ENCODE measurements at regions of chr9 and their contacts with region 1.

Region 1: GRCh38 chr9:122125158-122125508 is 32.0 kb upstream of the TTLL11 start:
- DNase-seq: peak; percentile 82 to 94 (median 90)
- H3K4me3 ChIP-seq: no peak overlapping the region
- H3K27ac ChIP-seq: peak overlapping the region in 43 of 59 donors; percentile 19 to 94 (median 79)
- H3K27me3 ChIP-seq: peaks cover 0 to 15% (median 0%) of the 10 kb centered on the region in 45 donors
- CTCF ChIP-seq: peak; percentile 89 to 100 (median 98)

Region 2: DNA sequence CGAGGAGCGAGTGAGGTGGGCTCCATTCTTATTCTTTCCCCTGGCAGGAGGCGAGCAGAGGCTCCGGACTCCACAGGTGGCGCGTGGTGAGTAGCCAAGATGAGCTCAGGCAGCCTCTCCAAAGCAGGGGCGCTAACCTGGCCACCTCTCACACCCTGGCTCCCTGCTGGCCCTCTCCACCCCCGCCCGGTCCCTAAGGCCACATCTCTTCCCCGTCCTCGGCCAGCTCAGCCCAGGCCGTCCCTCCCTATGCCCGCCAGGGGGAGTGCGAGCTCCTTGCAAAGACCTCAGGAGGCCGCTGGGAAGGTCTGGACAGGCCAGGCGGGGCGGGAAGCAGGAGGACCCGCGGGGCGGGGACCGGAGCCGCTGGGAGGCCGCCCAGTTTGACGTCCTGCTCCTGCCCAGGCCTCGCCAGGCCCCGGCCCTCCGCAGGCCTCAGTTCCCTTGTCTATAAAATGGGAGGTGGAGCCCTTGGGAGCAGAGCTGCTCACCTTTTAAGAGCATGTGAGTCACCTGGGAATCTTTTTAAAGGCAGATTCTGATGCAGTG is 579.2 kb before region 1 on chr9:
- intact Hi-C with region 1: loop called in 1 of 2 experiments (anchors 10 kb)
- DNase-seq: peak; percentile 88 to 97 (median 92)
- H3K4me3 ChIP-seq: peak overlapping the region in 56 of 59 donors; percentile 7 to 60 (median 45)
- H3K27ac ChIP-seq: peak overlapping the region in 5 of 59 donors; percentile 3 to 60 (median 51)
- H3K27me3 ChIP-seq: no peaks in the 10 kb centered on the region
- CTCF ChIP-seq: peak; percentile 37 to 98 (median 96)

Region 3: GRCh38 chr9:122099271-122099869 is 25.8 kb before region 1 on chr9:
- intact Hi-C with region 1: loop called (anchors 1 to 2 kb)
- DNase-seq: peak; percentile 81 to 90 (median 84)
- H3K4me3 ChIP-seq: peak overlapping the region in 29 of 59 donors; percentile 0 to 50 (median 31)
- H3K27ac ChIP-seq: peak overlapping the region in 3 of 59 donors; percentile 36 to 65 (median 49)
- H3K27me3 ChIP-seq: no peaks in the 10 kb centered on the region
- CTCF ChIP-seq: peak; percentile 82 to 99 (median 94)

Region 4: GRCh38 chr9:122264360-122265148 is 139.4 kb after region 1 on chr9 and contains the starts of genes MRRF and RBM18:
- intact Hi-C with region 1: loop called (anchors 10 kb)
- DNase-seq: peak; percentile 83 to 95 (median 88)
- H3K4me3 ChIP-seq: peak within 1 kb of the TSS; percentile 57 to 98 (median 83)
- H3K27ac ChIP-seq: peak within 1 kb of the TSS; percentile 49 to 95 (median 87)
- H3K27me3 ChIP-seq: no peaks in the 10 kb centered on the region
- CTCF ChIP-seq: peak in 28 of 56 donors; percentile 5 to 64 (median 30)
- total RNA-seq, gene MRRF: 21.9 to 44.0 (median 29.3) TPM
- total RNA-seq, gene RBM18: 14.1 to 43.0 (median 29.6) TPM

Region 5: DNA sequence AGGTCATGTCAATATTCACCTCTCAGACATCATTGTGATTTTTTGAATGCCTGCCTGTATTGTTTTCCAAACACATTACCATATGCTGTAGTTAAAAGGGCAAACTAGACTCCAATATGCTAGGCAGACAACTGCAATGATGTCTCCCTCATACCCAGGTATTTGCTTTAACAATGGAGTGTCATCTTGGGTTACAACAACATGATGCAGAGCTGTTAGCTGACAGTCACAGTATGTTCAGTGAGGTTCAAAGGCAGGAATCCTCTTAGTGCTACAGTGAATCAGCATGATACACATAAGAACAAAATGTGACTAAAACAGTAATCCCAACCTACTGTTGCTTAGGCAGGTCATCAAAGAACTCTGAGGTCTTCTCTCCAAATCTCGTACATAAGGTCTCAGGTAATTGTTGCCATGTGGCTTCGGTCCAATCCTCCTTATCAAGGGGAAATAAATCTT is 328.6 kb after region 1 on chr9:
- intact Hi-C with region 1: loop called in 1 of 2 experiments (anchors 10 kb)
- DNase-seq: no peak
- H3K4me3 ChIP-seq: no peak overlapping the region
- H3K27ac ChIP-seq: no peak overlapping the region
- H3K27me3 ChIP-seq: peaks cover 0 to 3% (median 0%) of the 10 kb centered on the region in 45 donors
- CTCF ChIP-seq: no peak

Region 6: GRCh38 chr9:122810306-122810946 is 685.3 kb after region 1 on chr9:
- intact Hi-C with region 1: loop called (anchors 10 kb)
- DNase-seq: peak; percentile 63 to 88 (median 76)
- H3K4me3 ChIP-seq: peak overlapping the region in 1 of 59 donors; percentile 21
- H3K27ac ChIP-seq: peak overlapping the region in 1 of 59 donors; percentile 31
- H3K27me3 ChIP-seq: no peaks in the 10 kb centered on the region
- CTCF ChIP-seq: peak; percentile 76 to 97 (median 88)

Measured in dorsolateral prefrontal cortex (tissue), 120 donors.